SK-N-SH (cell line): ENCODE measurements at regions of chr12 and their contacts with region 1.

Region 1: DNA sequence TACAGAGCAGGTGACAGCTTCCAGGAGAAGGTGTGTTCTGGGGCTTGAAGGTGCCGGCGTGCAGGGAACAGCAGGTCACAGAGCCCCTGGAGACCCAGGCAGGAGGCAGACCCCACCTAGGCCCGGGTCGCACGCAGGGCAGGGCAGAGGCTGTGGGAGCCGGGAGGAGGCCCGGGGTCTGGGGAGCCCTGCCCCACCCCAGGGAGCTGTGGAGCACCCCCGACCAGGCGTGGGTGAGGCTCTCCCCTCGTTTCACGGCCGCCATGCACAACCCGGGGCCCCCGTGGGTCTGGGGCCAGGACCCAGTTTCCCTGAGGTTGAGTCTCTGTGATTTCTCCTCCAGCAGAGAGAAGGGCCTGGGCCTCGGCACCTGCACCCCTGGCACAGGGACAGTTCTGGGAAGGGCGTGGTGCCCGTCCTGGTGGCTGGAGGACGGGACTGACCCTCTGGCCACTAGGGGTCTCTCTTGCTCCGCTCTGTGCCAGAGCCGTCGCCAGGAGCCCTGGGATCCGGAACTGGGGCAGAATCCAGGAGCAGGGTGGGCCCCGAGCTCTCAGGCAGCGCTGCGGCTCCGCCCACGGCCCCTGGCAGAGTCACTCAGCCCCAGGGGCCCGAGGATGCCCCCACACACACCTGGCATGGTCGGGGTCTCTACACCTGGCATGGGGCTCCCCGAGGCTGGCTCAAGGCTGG is 75.2 kb upstream of the FBRSL1 start:
- DNase-seq: peak; percentile 96
- H3K4me3 ChIP-seq: peak overlapping the region in 1 of 2 experiments; percentile 37; a peak in 1 of 4 replicates
- H3K27ac ChIP-seq: no peak overlapping the region
- H3K4me1 ChIP-seq: no peaks in the 10 kb centered on the region; a peak in 1 of 4 replicates
- H3K27me3 ChIP-seq: peaks cover 36% of the 10 kb centered on the region
- CTCF ChIP-seq: peak; percentile 91
- EP300 ChIP-seq: no peak
- RAD21 ChIP-seq: peak; percentile 92

Region 2: DNA sequence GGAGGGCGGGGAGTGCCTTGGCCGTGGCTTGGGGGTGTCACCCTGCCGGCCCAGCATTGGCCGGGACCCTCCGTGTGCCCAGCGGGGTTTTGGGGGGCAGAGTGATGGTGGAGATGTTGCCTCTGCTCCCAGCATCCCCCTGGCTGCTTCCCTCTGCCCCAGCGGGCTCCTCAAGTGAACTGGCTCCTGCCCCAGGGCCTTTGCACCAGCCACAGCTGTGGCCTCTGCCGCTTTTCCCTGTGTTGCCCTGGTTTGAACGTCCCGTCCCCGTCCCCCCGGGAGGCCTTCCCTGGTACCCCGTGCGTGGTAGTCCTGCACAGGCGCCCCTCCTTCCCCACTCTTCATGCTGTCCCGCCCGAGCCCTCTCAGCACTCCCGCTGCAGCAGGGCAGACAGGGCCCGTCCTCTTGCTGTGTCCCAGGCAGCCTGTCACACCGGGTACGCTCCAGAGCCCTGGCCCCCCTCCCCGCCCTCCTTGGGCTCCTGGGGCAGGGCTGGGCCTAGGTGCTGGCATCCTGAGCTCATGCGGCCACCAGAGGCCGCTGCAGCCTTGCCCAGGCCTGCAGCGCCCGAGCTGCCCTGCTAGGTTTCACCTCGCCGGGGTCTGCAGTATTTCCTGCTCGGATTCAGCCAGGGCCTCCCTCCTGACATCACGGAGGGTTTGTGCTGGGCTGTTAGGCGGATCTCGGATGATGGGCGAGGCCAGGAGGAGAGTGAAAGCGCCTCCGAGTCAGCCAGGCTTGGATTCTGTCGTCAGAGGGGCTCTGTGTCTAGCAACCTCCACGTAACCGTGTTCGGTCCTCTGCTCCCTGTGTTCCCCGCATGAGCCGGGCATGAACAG is 261.1 kb before region 1 on chr12:
- CTCF ChIA-PET with region 1: interaction called, 110 read pairs
- POLR2A ChIA-PET with region 1: interaction called, 4 read pairs
- DNase-seq: peak; percentile 95
- H3K4me3 ChIP-seq: peak overlapping the region in 1 of 2 experiments; percentile 33; a peak in 1 of 4 replicates
- H3K27ac ChIP-seq: no peak overlapping the region
- H3K4me1 ChIP-seq: no peaks in the 10 kb centered on the region
- H3K27me3 ChIP-seq: no peaks in the 10 kb centered on the region
- CTCF ChIP-seq: peak; percentile 87
- EP300 ChIP-seq: no peak
- RAD21 ChIP-seq: peak; percentile 89

Region 3: DNA sequence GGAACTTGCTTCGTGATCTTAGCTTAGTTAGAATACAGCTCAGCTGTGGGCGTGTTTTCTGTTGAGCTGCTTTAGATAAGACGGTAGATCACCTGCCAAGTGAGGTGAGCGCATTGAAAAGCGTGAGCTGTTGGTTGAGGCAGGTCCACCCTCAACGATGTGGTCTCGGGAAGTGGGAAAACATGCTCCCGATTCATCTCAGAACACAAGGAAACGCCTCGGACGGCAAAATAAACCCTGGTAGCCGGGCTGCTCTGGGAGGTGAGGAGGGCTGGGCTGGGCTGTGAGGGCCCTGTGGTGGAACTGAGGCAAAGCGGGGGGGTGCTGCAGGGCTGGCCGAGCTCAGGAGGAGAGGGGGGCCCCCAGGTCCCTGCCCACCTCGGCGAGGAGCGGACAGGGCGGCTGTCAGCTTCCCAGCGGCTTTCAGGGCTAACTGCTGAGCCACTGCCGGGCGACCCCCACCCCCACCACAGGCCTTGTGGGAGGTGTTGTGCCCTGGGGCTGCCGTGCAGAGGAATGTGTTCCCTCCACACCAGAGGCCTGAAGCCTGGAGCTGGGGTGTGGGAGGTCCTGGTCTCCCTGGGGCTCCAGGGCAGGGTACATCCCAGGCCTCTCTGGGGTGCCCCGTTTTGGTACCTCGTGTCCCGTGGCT is 239.8 kb before region 1 on chr12:
- CTCF ChIA-PET with region 1: interaction called, 15 read pairs
- POLR2A ChIA-PET with region 1: no interaction called
- DNase-seq: no peak
- H3K4me3 ChIP-seq: no peak overlapping the region
- H3K27ac ChIP-seq: no peak overlapping the region
- H3K4me1 ChIP-seq: peaks cover 2% of the 10 kb centered on the region in 2 experiments; a peak in 2 of 4 replicates
- H3K27me3 ChIP-seq: peaks cover 96% of the 10 kb centered on the region
- CTCF ChIP-seq: no peak
- EP300 ChIP-seq: no peak
- RAD21 ChIP-seq: no peak

Region 4: GRCh38 chr12:132445884-132446632 is 31.3 kb after region 1 on chr12:
- CTCF ChIA-PET with region 1: interaction called, 14 read pairs
- POLR2A ChIA-PET with region 1: no interaction called
- DNase-seq: no peak
- H3K4me3 ChIP-seq: no peak overlapping the region
- H3K27ac ChIP-seq: no peak overlapping the region
- H3K4me1 ChIP-seq: no peaks in the 10 kb centered on the region
- H3K27me3 ChIP-seq: peaks cover 19% of the 10 kb centered on the region; the same call in 1 of the 2 replicates
- CTCF ChIP-seq: no peak
- EP300 ChIP-seq: no peak
- RAD21 ChIP-seq: no peak

Region 5: DNA sequence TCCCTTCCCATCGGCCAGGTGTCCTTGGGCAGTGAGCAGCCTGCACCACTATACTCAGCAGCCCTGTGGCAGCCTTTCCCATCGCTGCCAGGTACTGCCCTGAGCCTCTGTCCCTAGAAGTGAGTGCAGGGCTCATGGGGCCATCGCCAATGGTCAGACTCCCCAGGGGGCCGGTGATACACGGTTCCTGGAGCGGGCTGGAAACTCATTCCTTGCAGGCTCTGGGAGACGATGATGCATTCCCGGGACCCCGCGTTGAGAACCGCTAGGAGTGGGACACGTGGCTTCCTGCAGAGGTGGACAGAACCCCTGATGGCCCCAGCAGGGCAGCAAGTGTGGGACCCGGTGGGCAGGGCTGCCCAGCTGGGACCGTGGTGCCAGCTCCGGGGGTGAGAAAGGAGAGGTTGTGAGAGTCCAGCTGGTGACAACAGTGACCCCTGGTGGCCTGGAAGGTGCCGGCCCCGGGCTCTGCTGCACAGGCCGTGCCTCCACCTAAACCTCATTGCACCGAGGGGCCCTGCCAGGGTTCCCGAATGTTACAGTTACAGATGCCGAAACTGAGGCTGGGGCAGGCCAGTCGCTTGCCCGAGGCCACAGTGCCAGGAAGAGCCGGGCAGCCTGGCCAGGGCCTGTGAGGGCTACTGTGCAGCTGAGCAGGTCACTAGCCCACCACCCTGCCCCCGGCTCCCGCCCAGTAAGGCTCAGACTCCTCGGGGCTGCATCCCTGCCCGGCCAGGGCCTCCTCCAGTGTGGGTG is 109.0 kb after region 1 on chr12:
- CTCF ChIA-PET with region 1: interaction called, 149 read pairs
- POLR2A ChIA-PET with region 1: no interaction called
- DNase-seq: peak; percentile 93
- H3K4me3 ChIP-seq: no peak overlapping the region; a peak in 1 of 4 replicates
- H3K27ac ChIP-seq: no peak overlapping the region
- H3K4me1 ChIP-seq: no peaks in the 10 kb centered on the region; a peak in 1 of 4 replicates
- H3K27me3 ChIP-seq: no peaks in the 10 kb centered on the region
- CTCF ChIP-seq: peak; percentile 80
- EP300 ChIP-seq: no peak
- RAD21 ChIP-seq: peak; percentile 67

Region 6: GRCh38 chr12:132566516-132567131 is 151.8 kb after region 1 on chr12:
- CTCF ChIA-PET with region 1: interaction called, 80 read pairs
- POLR2A ChIA-PET with region 1: interaction called, 3 read pairs
- DNase-seq: no peak
- H3K4me3 ChIP-seq: no peak overlapping the region
- H3K27ac ChIP-seq: no peak overlapping the region
- H3K4me1 ChIP-seq: peaks cover 0 to 3% of the 10 kb centered on the region in 2 experiments; a peak in 1 of 4 replicates
- H3K27me3 ChIP-seq: no peaks in the 10 kb centered on the region
- CTCF ChIP-seq: no peak
- EP300 ChIP-seq: no peak
- RAD21 ChIP-seq: no peak

Region 7: DNA sequence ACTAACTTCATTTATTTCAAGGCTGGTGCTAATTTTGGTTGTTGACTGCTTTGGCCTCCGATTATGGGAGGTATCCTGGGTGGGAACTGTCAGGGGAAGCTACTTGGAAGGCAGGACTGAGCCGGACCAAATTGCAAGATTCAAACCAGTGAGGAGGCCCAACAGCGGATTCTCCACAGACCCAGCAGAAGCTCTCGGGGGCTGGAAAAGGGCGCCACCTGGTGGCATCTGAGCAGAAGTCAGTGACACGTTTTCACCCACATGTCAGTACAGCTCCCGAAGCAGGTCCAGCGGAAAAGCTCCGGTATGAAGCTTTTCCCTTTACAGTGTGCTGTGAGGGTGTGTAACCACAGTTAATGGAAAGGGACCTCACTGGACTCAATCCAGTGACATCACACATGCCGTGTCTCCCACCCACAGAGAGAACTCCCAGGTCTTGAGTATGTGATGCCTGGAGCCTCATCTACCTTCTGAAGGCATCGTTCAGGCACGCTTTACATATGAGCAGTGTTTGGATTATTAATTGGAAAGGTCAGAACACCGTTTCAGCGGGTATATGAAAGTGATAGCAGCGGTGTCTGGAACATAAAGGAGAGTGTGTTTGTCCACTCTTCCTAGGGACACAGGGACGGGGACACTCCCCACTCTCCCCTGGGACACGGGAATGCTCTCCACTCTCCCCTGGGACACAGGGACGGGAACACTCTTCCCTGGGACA is 200.2 kb after region 1 on chr12:
- CTCF ChIA-PET with region 1: interaction called, 71 read pairs
- POLR2A ChIA-PET with region 1: interaction called, 3 read pairs
- DNase-seq: peak; percentile 88
- H3K4me3 ChIP-seq: no peak overlapping the region; a peak in 1 of 4 replicates
- H3K27ac ChIP-seq: no peak overlapping the region
- H3K4me1 ChIP-seq: peaks cover 0 to 12% of the 10 kb centered on the region in 2 experiments; a peak in 1 of 4 replicates
- H3K27me3 ChIP-seq: peaks cover 47% of the 10 kb centered on the region
- CTCF ChIP-seq: peak; percentile 89
- EP300 ChIP-seq: no peak
- RAD21 ChIP-seq: peak; percentile 89